ENCODE measurements at regions of chr11 and their contacts with region 1.

Region 1: DNA sequence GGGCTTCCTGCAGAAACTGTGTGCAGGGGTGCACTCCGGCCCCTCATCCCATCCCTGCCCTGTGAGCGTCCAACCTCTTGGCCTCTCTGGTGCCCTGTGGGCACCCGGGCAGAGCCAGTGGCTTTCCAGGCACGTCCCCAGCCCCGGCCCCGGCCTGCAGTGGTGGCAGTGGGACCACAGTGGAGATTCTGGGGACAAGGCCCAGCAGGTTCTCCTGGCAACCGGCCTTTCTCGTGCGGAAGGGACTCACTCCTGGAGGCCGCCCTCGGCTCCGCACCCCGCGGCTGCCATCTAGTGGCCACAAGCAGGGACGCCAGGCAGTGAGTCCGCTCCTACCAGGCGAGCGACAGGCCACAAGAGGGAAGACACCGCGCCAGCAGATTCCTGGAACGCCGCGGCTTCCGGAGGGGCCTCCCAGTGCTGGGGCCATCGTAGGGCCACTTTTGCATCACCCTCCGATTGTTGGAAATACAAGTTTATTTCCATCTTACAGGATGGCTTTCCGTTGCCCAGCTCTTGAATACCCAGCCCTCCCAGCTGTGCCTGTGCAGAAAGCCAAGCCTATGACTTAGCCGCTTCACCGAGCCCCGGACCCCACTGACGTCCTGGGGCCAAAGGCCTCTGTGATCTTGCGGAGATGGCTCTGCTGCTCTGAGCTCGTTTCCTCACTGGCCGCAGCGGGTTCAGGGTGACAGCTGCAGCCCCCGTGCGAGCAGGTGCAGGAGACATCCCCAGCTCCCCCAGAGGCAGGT is 357.3 kb downstream of the CTTN start:
- DNase-seq: peak; percentile 68 to 84 (median 79)
- ATAC-seq: peak; percentile 91 to 99 (median 96)
- H3K4me3 ChIP-seq: no peak overlapping the region
- H3K27ac ChIP-seq: no peak overlapping the region
- H3K4me1 ChIP-seq: peaks cover 0 to 8% (median 0%) of the 10 kb centered on the region in 12 donors
- H3K27me3 ChIP-seq: peaks cover 0 to 18% (median 3%) of the 10 kb centered on the region in 9 donors
- CTCF ChIP-seq: peak; percentile 87 to 99 (median 94)
- POLR2A ChIP-seq: no peak

Region 2: DNA sequence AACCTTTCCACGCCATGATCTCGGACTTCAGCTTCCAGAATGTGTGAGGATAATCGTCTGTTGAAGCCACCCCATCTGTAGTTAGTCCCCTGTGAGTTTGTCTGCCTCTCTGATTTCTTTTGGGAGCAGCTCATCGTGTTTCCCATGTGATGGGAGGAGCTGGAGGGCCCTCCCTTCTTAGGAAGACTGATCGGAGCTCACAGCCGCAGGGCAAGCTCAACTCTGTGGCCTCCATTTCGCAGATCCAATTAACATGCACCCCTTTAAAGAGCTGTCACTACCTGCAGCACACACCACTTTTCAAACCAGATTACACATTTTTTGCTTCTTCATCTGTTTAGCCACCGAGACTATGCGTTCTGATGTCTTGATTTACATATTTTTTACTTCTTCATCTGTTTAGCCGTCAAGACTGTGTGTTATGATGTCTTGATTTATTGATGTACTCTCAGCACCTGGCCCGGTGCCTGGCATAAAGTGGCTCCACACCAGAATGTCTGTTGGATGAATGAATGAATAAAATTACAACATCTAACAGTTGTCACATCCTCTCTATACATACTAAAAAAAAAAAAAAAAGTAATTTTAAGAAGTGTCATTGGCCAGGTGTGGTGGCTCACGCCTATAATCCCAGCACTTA is 500.0 kb before region 1 on chr11:
- intact Hi-C with region 1: no loop called
- DNase-seq: no peak
- ATAC-seq: no peak
- H3K4me3 ChIP-seq: no peak overlapping the region
- H3K27ac ChIP-seq: no peak overlapping the region
- H3K4me1 ChIP-seq: peaks cover 0 to 3% (median 0%) of the 10 kb centered on the region in 12 donors
- H3K27me3 ChIP-seq: peaks cover 0 to 6% (median 0%) of the 10 kb centered on the region in 9 donors
- CTCF ChIP-seq: no peak
- POLR2A ChIP-seq: no peak

Region 3: GRCh38 chr11:70503458-70504221 is 251.9 kb before region 1 on chr11:
- intact Hi-C with region 1: loop called in 1 of 10 experiments (anchors 1 kb)
- DNase-seq: peak in 2 of 5 donors; percentile 27 to 35
- ATAC-seq: no peak
- H3K4me3 ChIP-seq: no peak overlapping the region
- H3K27ac ChIP-seq: no peak overlapping the region
- H3K4me1 ChIP-seq: peaks cover 0 to 9% (median 2%) of the 10 kb centered on the region in 12 donors
- H3K27me3 ChIP-seq: no peaks in the 10 kb centered on the region
- CTCF ChIP-seq: peak in 5 of 12 donors; percentile 8 to 35 (median 27)
- POLR2A ChIP-seq: no peak

Region 4: DNA sequence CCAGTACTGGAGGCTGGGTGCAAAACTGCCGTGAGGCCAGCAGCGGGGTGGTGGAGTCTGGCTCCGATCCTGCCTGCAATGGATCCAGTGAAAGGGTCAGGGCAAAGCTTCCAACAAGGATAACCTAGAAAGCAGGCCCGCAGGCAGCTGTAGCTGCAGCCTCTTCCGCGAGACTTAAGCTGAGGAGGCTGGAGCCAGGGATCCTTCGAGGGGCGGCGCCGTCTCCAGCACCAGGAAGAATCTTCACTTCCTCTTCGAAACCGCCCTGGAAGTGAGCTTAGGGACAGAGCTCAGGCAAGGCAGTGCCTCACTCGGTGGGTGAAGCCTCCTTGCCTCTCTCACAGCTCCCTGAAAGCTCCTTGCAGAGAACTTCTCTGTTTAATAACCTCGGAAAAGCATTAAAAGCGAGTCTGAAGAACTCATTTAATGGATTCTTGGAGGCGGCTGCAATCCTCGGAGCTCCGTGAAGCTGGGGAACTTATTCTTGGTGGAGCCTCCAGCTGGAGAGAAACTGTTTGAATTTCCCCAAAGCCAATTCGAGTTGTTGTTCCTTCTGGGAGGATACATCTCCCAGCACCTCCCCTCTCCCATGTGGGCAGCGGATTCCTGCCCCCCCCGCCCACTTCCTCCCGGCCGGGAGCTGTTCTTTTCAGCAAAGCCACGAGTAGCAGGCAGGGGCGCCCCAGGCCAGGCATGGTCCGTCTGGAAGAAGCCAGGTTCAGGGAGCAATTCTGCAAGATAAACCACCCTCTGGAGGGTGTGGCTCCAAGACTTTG is 187.4 kb before region 1 on chr11:
- intact Hi-C with region 1: loop called in 1 of 10 experiments (anchors 5 kb)
- DNase-seq: peak; percentile 49 to 79 (median 66)
- ATAC-seq: peak; percentile 74 to 89 (median 86)
- H3K4me3 ChIP-seq: peak overlapping the region; percentile 9 to 61 (median 44)
- H3K27ac ChIP-seq: peak overlapping the region; percentile 31 to 93 (median 77)
- H3K4me1 ChIP-seq: peaks cover 0 to 21% (median 15%) of the 10 kb centered on the region in 12 donors
- H3K27me3 ChIP-seq: peaks cover 0 to 9% (median 0%) of the 10 kb centered on the region in 9 donors
- CTCF ChIP-seq: peak in 11 of 12 donors; percentile 10 to 59 (median 33)
- POLR2A ChIP-seq: no peak

Measured in heart left ventricle (tissue), 16 donors.